A549 (cell line): ENCODE measurements at regions of chr17 and their contacts with region 1.

Region 1: GRCh38 chr17:29389982-29390850 is at the start of gene TAOK1:
- DNase-seq: peak; percentile 95 to 99
- ATAC-seq: peak; percentile 93
- H3K4me3 ChIP-seq: peak within 1 kb of the TSS; percentile 79
- H3K27ac ChIP-seq: peak within 1 kb of the TSS; percentile 96 to 98
- H3K4me1 ChIP-seq: peaks cover 27% of the 10 kb centered on the region
- CTCF ChIP-seq: no peak
- EP300 ChIP-seq: no peak
- POLR2A ChIP-seq: peak; percentile 93
- RAD21 ChIP-seq: no peak; a peak in 1 of 5 replicates
- polyA plus RNA-seq, gene TAOK1: 46.7 and 47.1 TPM in 2 replicates

Region 2: DNA sequence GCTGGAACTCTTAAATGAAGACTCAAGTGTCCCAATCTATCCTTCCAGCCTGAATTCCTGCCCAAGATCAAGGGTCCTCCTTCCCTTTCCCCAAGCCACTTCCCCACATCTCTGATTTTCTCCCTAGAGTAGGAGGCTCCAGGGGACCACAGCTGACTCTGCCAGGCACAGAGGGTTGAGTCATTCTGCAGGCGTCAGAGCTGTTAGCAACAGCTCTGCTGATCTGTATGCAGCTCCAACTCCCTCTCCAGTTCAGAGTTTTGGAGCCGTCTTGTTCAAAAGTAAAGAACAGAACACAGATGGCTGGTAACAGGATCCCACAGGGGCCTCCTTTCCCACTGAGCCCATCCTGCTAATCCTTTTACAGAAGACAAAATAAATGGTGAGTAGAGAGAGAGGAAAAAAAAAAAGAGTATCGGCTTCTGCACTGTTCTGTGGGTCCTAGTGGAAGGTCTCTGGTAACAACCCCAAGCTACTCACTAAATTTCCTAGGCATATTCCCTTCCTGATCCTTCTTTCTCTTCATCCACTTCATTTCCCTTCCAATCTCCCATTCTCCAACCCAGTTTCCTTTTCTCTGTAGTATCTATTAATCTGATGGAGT is 13.4 kb before region 1 on chr17:
- CTCF ChIA-PET with region 1: interaction called, 147 read pairs
- POLR2A ChIA-PET with region 1: interaction called, 12 read pairs
- DNase-seq: peak; percentile 55 to 76
- ATAC-seq: peak; percentile 94 to 97
- H3K4me3 ChIP-seq: no peak overlapping the region
- H3K27ac ChIP-seq: peak overlapping the region in 1 of 2 experiments; percentile 77; a peak in 3 of 6 replicates
- H3K4me1 ChIP-seq: peaks cover 43% of the 10 kb centered on the region
- CTCF ChIP-seq: no peak
- EP300 ChIP-seq: no peak
- POLR2A ChIP-seq: no peak
- RAD21 ChIP-seq: no peak

Region 3: GRCh38 chr17:29451121-29451742 is 61.0 kb after region 1 on chr17:
- CTCF ChIA-PET with region 1: no interaction called
- POLR2A ChIA-PET with region 1: no interaction called
- DNase-seq: no peak
- ATAC-seq: no peak; a peak in 1 of 6 replicates
- H3K4me3 ChIP-seq: no peak overlapping the region
- H3K27ac ChIP-seq: no peak overlapping the region
- H3K4me1 ChIP-seq: peaks cover 9% of the 10 kb centered on the region; the same call in 2 of the 3 replicates
- CTCF ChIP-seq: no peak
- EP300 ChIP-seq: no peak
- POLR2A ChIP-seq: no peak
- RAD21 ChIP-seq: no peak